Activated CD8-positive, alpha-beta memory T cell treated with anti-CD3 and anti-CD28 coated beads, Interleukin-2, amount 10 ng/mL, durations not matched to agents 7 days and 5 days (primary cell): ENCODE measurements at regions of chr3 and their contacts with region 1.

Region 1: DNA sequence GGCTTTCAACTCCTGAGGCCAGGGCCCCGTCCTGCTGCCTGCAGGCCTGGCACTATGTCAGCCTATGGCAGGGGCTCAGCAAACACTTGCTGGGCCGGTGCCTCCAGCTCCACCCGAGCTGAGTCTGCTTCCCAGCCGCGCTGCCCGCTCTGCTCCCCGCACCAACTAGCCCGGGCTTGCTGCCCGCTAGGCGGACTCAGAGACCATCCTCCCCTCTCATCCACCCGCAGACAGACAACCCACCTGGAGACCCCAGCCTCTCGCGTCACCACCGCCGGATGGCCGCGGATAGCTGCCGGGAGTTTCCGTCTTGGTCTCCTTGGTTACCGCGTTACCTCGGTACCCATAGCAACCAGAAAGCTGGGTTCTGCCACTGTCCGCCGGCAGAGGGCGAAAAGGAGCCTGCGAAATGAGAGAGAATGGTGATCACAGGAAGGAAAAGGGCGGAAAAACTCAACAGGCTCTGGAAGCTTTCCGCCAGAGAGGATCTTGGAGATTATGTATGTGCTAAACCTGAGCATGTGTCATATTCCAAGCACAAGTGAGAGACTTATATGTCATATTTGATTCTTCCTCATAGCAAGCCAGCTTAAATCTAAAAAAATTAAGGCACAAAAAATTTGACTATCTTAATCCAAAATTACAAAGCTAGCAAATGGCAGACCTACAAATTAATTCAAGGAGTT is at the start of gene ZBBX:
- DNase-seq: peak; percentile 88
- ATAC-seq: peak; percentile 90
- H3K4me3 Mint-ChIP-seq: peak within 1 kb of the TSS; percentile 54
- H3K27ac Mint-ChIP-seq: peak within 1 kb of the TSS; percentile 32
- H3K4me1 Mint-ChIP-seq: peaks cover 7% of the 10 kb centered on the region
- H3K27me3 Mint-ChIP-seq: peaks cover 10% of the 10 kb centered on the region
- total RNA-seq, gene ZBBX: not detected

Region 2: GRCh38 chr3:167361306-167361705 is 18.8 kb before region 1 on chr3:
- CTCF ChIA-PET with region 1: interaction called, 13 read pairs
- DNase-seq: no peak
- ATAC-seq: no peak
- H3K4me3 Mint-ChIP-seq: no peak overlapping the region
- H3K27ac Mint-ChIP-seq: no peak overlapping the region
- H3K4me1 Mint-ChIP-seq: no peaks in the 10 kb centered on the region
- H3K27me3 Mint-ChIP-seq: no peaks in the 10 kb centered on the region

Region 3: GRCh38 chr3:167740961-167741587 is 360.9 kb after region 1 on chr3:
- CTCF ChIA-PET with region 1: interaction called, 10 read pairs
- DNase-seq: peak; percentile 57
- ATAC-seq: peak; percentile 92
- H3K4me3 Mint-ChIP-seq: no peak overlapping the region
- H3K27ac Mint-ChIP-seq: no peak overlapping the region
- H3K4me1 Mint-ChIP-seq: peaks cover 19% of the 10 kb centered on the region
- H3K27me3 Mint-ChIP-seq: no peaks in the 10 kb centered on the region

Region 4: DNA sequence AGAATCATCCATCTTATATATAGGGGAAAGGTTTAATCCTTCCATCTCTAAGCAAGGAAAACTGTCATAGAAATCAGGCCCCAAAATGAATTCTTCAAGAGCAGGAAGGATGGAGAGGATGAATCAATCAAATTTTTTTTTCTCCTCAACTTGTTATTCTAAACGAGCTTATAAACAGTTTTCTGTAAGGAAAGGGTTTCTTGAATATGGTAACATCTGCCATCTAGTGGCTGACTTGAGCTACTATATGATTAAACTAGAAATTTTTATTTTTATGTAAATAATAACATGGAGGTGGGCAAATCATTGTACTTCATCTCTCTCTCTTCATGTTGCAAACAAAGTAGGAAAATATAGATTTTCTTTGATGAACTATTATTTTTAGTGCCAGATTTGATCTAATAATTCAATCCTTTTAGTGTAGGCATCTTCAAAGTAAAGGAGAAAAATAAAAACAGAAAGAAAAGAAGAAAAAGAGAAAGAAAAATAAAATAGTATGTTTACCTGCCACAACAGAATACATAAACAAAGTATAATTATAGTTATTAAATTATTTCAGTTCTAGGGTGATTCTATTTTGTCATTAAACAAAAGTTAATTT is 502.0 kb after region 1 on chr3:
- CTCF ChIA-PET with region 1: interaction called, 30 read pairs
- DNase-seq: no peak
- ATAC-seq: peak; percentile 42
- H3K4me3 Mint-ChIP-seq: no peak overlapping the region
- H3K27ac Mint-ChIP-seq: no peak overlapping the region
- H3K4me1 Mint-ChIP-seq: peaks cover 2% of the 10 kb centered on the region
- H3K27me3 Mint-ChIP-seq: peaks cover 22% of the 10 kb centered on the region